Activated naive CD4-positive, alpha-beta T cell treated with anti-CD3 and anti-CD28 coated beads for 36 hours (primary cell): ENCODE measurements at regions of chr21 and their contacts with region 1.

Region 1: GRCh38 chr21:34986561-34987500 is 62.3 kb downstream of the RUNX1 start:
- DNase-seq: peak; percentile 92
- H3K4me3 Mint-ChIP-seq: peak overlapping the region; percentile 71
- H3K27ac Mint-ChIP-seq: peak overlapping the region; percentile 89
- H3K4me1 Mint-ChIP-seq: peaks cover 94% of the 10 kb centered on the region
- H3K27me3 Mint-ChIP-seq: no peaks in the 10 kb centered on the region

Region 2: GRCh38 chr21:34933609-34934335 is 53.1 kb before region 1 on chr21:
- CTCF ChIA-PET with region 1: interaction called, 4 read pairs
- intact Hi-C with region 1: loop called (anchors 1 kb)
- DNase-seq: peak; percentile 51
- H3K4me3 Mint-ChIP-seq: peak overlapping the region; percentile 77
- H3K27ac Mint-ChIP-seq: peak overlapping the region; percentile 97
- H3K4me1 Mint-ChIP-seq: peaks cover 80% of the 10 kb centered on the region
- H3K27me3 Mint-ChIP-seq: no peaks in the 10 kb centered on the region

Region 3: GRCh38 chr21:34967509-34968289 is 19.1 kb before region 1 on chr21:
- CTCF ChIA-PET with region 1: interaction called, 20 read pairs
- intact Hi-C with region 1: loop called (anchors 1 kb)
- DNase-seq: peak; percentile 73
- H3K4me3 Mint-ChIP-seq: peak overlapping the region; percentile 47
- H3K27ac Mint-ChIP-seq: peak overlapping the region; percentile 93
- H3K4me1 Mint-ChIP-seq: peaks cover 84% of the 10 kb centered on the region
- H3K27me3 Mint-ChIP-seq: no peaks in the 10 kb centered on the region

Region 4: GRCh38 chr21:35020902-35021301 is 34.1 kb after region 1 on chr21:
- CTCF ChIA-PET with region 1: interaction called, 14 read pairs
- intact Hi-C with region 1: loop called (anchors 1 kb)
- DNase-seq: peak; percentile 52
- H3K4me3 Mint-ChIP-seq: no peak overlapping the region
- H3K27ac Mint-ChIP-seq: peak overlapping the region; percentile 80
- H3K4me1 Mint-ChIP-seq: peaks cover 89% of the 10 kb centered on the region
- H3K27me3 Mint-ChIP-seq: no peaks in the 10 kb centered on the region

Region 5: DNA sequence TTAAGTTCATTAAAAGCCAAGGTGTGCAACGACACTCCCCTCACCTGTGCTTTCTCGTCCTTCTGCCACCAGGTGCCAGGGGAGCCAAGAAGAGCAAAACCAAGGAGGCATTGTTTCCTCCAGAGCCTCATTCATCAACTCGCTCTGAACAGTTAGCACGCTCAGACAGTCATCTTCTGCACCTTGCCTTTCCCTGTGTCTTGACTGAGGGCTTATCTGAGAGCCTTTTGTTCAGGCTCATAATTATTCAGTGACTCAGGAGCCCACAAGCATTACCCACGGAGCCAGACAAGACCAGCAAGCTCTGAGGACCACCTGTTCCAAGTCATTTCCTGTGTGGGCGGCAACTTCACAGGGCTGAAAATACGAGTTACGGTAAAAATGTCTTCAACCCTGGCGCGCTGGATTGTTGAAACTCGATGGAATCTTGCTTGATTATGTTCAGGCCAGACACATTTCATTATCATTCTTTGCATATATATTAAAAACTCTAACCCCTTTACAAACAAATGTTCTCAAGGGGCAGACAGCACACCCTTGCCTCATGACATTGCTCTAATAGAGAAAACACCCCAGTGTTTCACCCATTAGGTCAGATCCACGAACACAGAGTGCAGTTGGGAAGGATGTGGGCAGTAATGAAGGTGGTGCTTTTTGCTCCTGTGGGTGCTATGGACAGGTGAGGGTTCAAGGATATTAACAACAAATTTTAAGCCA is 152.0 kb after region 1 on chr21:
- CTCF ChIA-PET with region 1: no interaction called
- intact Hi-C with region 1: loop called (anchors 2 kb)
- DNase-seq: peak; percentile 87
- H3K4me3 Mint-ChIP-seq: peak overlapping the region; percentile 70
- H3K27ac Mint-ChIP-seq: peak overlapping the region; percentile 95
- H3K4me1 Mint-ChIP-seq: peaks cover 38% of the 10 kb centered on the region
- H3K27me3 Mint-ChIP-seq: no peaks in the 10 kb centered on the region